MCF 10A (cell line): ENCODE measurements at regions of chr14 and their contacts with region 1.

Region 1: DNA sequence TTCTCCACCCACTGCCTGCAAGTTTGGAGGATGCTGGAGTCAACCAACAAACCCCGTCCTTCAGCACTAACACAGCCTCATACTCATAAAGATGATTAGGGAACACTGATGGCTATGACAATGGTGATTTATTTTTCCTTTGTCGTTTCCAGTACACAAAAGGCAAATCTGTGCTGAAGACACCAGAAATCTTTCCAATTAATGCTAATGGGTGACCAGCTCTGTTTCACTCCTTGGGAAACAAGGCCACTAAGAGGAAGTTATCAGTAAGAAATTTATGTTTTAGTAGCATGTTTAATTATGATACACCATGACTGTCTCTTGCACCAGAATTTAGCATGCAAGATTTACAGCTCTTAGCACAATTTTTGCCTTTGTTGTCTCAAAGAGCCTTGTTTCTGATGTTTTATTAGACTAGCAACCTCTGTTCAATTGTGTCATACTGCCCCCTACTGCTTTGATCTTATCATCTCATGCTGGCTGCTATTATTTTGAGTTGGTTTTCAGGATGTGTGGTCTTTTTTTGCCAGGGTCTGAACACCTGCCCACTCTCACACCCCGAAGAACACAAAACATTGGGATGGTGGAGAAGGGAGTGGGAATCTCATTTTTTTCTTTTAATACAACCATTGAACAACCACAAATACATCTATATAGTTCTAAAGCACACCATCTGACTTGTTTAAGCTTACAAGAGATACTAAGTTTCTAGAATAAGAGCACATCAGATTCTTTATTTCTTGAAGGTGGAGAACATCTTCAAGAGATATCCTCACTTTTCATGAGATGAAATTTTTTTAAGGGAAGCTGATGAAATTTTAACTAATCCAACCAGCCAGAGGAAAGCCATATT is 160.9 kb downstream of the SPTSSA start:
- DNase-seq: peak; percentile 73
- H3K4me3 Mint-ChIP-seq: no peak overlapping the region
- H3K27ac Mint-ChIP-seq: peak overlapping the region; percentile 57
- H3K4me1 Mint-ChIP-seq: peaks cover 18% of the 10 kb centered on the region
- H3K27me3 Mint-ChIP-seq: no peaks in the 10 kb centered on the region
- CTCF ChIP-seq: peak; percentile 76

Region 2: DNA sequence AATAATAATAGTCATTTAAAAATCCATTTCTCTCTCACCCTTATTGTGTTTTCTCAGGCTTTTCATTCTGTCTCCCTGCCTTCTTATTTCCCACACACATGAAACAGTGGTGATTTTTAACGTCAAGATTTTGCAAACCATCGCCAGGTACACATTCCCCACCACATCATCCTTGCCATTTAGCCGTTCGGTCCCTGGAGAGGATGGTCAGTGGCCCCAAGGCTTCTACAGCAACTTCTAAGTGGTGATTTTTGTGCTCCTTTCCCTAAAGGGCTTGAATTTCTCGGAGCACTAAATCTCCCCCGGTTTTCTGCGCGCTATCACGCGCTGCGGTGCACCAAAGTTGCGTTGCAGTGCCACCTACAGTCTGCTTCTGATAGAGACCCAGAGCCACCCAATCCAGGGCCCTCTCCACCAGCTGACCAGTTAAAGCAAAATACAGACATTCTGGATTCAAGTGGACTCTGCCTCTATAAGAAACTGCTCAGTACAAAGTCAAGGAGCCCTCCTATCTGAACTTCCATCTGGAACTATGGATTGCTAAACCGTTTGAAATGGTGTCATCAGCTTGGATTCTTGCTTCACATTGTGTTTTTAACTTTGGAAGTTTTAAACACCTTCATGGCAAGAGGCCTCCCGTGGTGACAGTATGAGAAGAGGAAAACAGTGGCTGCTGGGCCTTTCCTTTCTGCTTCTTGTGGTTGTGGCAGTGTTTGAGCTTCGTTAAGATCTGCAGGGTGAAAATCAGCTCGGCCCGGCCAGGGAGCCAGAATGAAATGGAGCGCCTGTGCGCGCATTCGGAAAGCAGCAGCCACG is 73.1 kb before region 1 on chr14:
- CTCF ChIA-PET with region 1: interaction called, 32 read pairs
- POLR2A ChIA-PET with region 1: interaction called, 3 read pairs
- intact Hi-C with region 1: loop called (anchors 2 kb)
- DNase-seq: peak; percentile 70
- H3K4me3 Mint-ChIP-seq: peak overlapping the region; percentile 46
- H3K27ac Mint-ChIP-seq: peak overlapping the region; percentile 50
- H3K4me1 Mint-ChIP-seq: peaks cover 31% of the 10 kb centered on the region
- H3K27me3 Mint-ChIP-seq: no peaks in the 10 kb centered on the region
- CTCF ChIP-seq: peak; percentile 76

Region 3: GRCh38 chr14:34237081-34237480 is 64.0 kb before region 1 on chr14:
- CTCF ChIA-PET with region 1: interaction called, 10 read pairs
- POLR2A ChIA-PET with region 1: no interaction called
- intact Hi-C with region 1: no loop called
- DNase-seq: peak; percentile 17
- H3K4me3 Mint-ChIP-seq: no peak overlapping the region
- H3K27ac Mint-ChIP-seq: peak overlapping the region; percentile 25
- H3K4me1 Mint-ChIP-seq: peaks cover 19% of the 10 kb centered on the region
- H3K27me3 Mint-ChIP-seq: no peaks in the 10 kb centered on the region
- CTCF ChIP-seq: no peak